HepG2 (cell line): ENCODE measurements at regions of chr10 and their contacts with region 1.

Region 1: DNA sequence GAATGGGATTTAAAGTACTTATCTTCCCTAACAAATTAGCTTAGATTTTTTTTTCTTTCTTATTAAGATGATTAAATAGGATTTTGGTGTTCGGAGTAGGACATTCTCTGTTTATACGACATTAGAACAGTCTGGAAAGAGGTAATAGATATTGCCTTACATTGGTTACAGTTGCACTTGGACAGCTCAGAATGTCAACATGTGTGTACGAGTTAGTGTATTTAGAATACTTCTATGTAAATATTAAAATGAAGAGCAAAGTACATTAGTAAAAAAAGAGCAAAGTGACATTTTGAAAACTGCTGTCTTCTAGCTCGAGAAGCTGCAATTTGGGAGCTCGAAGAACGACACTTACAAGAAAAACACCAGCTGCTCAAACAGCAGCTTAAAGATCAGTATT is 51.5 kb downstream of the SLK start:
- DNase-seq: no peak
- ATAC-seq: no peak
- H3K4me3 ChIP-seq: no peak overlapping the region
- H3K27ac ChIP-seq: no peak overlapping the region
- H3K4me1 ChIP-seq: no peaks in the 10 kb centered on the region
- H3K27me3 ChIP-seq: no peaks in the 10 kb centered on the region
- CTCF ChIP-seq: no peak
- EP300 ChIP-seq: no peak
- POLR2A ChIP-seq: no peak
- RAD21 ChIP-seq: no peak

Region 2: DNA sequence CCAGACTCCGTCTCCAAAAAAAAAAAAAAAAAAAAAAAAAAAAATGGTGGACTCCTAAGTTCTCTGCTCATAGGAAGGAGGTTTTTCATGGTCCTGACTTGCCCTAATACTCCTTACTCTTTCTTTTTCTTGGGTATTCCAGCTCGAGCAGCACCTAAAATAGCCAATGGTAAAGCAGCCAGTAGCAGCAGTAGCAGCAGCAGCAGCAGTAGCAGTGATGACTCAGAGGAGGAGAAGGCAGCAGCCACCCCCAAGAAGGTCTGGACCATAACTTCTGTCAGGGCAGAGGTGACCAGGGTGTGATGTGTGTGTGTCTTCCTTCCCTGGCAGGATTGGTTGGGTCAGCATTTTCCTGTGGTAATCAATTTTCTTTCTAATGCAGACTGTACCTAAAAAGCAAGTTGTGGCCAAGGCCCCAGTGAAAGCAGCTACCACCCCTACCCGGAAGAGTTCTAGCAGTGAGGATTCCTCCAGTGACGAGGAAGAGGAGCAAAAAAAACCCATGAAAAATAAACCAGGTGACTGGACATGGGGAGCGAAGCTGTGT is 1859.3 kb before region 1 on chr10:
- CTCF ChIA-PET with region 1: no interaction called
- POLR2A ChIA-PET with region 1: no interaction called
- in situ Hi-C with region 1: no loop called
- intact Hi-C with region 1: no loop called
- DNase-seq: no peak
- ATAC-seq: no peak
- H3K4me3 ChIP-seq: no peak overlapping the region
- H3K27ac ChIP-seq: no peak overlapping the region
- H3K4me1 ChIP-seq: peaks cover 11% of the 10 kb centered on the region
- H3K27me3 ChIP-seq: no peaks in the 10 kb centered on the region
- CTCF ChIP-seq: no peak
- EP300 ChIP-seq: no peak
- POLR2A ChIP-seq: no peak
- RAD21 ChIP-seq: no peak

Region 3: DNA sequence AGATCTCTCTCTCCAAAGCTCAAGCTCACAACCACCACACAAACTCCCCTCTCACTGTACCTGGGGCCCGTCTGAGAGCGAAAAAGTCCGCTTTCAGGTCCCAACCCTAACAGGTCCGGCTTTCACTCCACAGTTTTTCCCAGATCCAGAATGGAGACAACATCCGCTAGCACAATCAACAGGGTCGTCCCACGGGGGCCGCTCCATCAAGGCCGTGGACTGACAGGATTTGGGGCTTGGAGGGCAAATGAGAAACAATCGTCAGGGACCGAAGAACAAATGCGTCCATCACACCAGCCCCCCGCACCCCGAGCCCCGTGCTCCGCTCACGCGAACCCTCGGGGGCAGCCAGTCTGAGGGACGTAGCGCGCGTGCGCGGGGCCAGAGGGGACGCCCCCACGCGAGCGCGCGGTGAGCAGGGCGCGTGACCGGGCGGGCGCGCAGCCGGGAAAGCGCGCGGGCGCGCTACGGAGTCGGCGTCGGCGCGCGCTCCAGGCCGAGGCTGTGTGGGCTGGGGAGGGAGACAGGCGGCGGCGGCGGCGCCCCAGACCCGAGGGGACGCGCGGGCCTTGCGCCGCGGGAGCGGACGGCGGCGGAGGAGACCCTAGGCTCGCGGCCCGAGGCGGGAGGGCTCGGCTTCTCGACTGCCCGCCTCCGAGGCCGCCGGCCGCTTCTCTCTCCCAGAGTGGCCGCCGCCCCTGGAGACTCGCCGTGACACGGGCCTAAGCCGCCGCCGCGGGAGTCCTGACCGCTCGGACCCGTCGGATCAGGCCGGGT is 51.6 kb before region 1 on chr10 and contains the start of gene SLK:
- CTCF ChIA-PET with region 1: no interaction called
- POLR2A ChIA-PET with region 1: no interaction called
- in situ Hi-C with region 1: no loop called
- intact Hi-C with region 1: no loop called
- DNase-seq: peak; percentile 53
- ATAC-seq: peak; percentile 87
- H3K4me3 ChIP-seq: peak within 1 kb of the TSS; percentile 83 to 93 (median 88)
- H3K27ac ChIP-seq: peak within 1 kb of the TSS; percentile 85
- H3K4me1 ChIP-seq: peaks cover 35% of the 10 kb centered on the region
- H3K27me3 ChIP-seq: peaks cover 0 to 3% of the 10 kb centered on the region in 2 experiments; a peak in 1 of 5 replicates
- CTCF ChIP-seq: no peak
- EP300 ChIP-seq: no peak
- POLR2A ChIP-seq: peak; percentile 44 to 85; a peak in 3 of 4 replicates
- RAD21 ChIP-seq: no peak; the same call in 1 of the 2 replicates
- total RNA-seq, gene SLK: 22.8 and 35.0 TPM in 2 replicates

Region 4: GRCh38 chr10:104034401-104035193 is 16.1 kb after region 1 on chr10:
- CTCF ChIA-PET with region 1: no interaction called
- POLR2A ChIA-PET with region 1: no interaction called
- in situ Hi-C with region 1: no loop called
- intact Hi-C with region 1: loop called (anchors 1 kb)
- DNase-seq: no peak
- ATAC-seq: peak; percentile 20
- H3K4me3 ChIP-seq: no peak overlapping the region
- H3K27ac ChIP-seq: no peak overlapping the region
- H3K4me1 ChIP-seq: no peaks in the 10 kb centered on the region; the same call in 1 of the 2 replicates
- H3K27me3 ChIP-seq: no peaks in the 10 kb centered on the region; a peak in 2 of 5 replicates
- CTCF ChIP-seq: no peak
- EP300 ChIP-seq: no peak
- POLR2A ChIP-seq: no peak
- RAD21 ChIP-seq: no peak